A673 (cell line): ENCODE measurements at regions of chr7 and their contacts with region 1.

Region 1: DNA sequence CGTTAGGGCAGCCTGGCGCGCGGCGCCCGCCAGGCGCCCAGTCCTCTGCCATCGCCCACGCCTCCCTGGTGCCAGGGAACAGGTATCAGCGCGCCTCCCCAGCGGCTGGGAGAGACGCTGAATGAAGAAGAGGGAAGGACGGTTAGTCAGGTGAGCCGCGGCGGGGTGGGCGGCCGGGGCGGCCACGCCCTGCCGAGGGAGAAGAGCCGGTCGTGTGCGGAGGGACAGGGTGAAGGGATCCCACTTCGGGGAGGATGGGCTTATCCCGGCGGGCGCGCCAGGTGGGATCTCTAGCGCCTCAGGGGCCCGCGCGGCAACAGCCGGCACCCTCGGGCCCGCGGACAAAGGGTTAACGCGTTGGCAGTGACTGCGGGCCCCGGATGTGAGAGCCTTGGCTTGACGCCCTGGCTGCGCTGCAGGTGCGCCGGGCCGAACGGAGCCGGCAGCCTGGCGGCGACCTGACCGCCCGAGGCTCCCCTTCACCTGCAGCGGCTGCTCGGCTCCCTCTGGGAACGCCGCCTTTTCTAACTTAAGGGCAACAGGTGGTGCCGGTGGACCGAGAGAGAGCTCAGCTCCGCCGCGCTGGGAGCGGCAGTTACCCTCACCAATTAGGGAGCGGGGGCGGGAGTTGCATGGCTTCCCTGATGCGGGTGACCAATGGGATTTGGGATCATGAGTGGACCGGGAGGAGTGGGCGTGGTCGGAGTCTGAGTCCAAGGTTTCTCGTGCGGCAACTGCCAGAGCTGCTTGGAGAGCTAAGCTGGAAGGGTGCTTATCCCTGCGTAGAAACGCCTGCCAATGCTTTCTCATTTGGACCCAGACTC is at the start of gene ARL4A:
- DNase-seq: peak; percentile 99
- H3K4me3 ChIP-seq: peak within 1 kb of the TSS; percentile 78
- H3K27ac ChIP-seq: peak within 1 kb of the TSS; percentile 82
- H3K4me1 ChIP-seq: peaks cover 11% of the 10 kb centered on the region
- H3K27me3 ChIP-seq: no peaks in the 10 kb centered on the region
- CTCF ChIP-seq: peak; percentile 57
- total RNA-seq, gene ARL4A: 15.9 and 18.3 TPM in 2 replicates

Region 2: DNA sequence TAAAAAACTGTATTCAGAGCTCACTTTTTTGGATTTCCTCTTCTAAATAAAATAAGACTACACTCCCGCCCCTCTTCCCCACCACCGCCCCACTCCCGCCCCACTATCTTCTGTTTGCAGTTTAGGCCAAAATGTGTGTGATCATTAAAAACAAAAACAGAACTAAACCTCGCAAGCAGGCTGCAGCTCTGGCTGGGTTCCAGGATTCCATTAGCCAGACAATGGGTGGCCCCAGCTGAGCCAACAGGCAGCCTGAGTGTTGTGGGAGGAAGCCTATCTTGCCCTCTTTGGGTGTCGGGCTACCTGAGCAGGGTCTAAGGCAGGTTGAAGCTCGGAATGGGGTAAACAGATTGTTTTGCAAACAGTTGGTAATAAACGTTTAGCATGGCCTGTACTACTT is 42.0 kb after region 1 on chr7:
- CTCF ChIA-PET with region 1: interaction called, 8 read pairs
- POLR2A ChIA-PET with region 1: no interaction called
- intact Hi-C with region 1: loop called (anchors 5 kb)
- DNase-seq: peak; percentile 78
- H3K4me3 ChIP-seq: no peak overlapping the region
- H3K27ac ChIP-seq: no peak overlapping the region
- H3K4me1 ChIP-seq: peaks cover 39% of the 10 kb centered on the region
- H3K27me3 ChIP-seq: no peaks in the 10 kb centered on the region
- CTCF ChIP-seq: no peak

Region 3: GRCh38 chr7:12888717-12889116 is 201.6 kb after region 1 on chr7:
- CTCF ChIA-PET with region 1: no interaction called
- POLR2A ChIA-PET with region 1: no interaction called
- intact Hi-C with region 1: loop called (anchors 10 kb)
- DNase-seq: no peak
- H3K4me3 ChIP-seq: no peak overlapping the region
- H3K27ac ChIP-seq: no peak overlapping the region
- H3K4me1 ChIP-seq: no peaks in the 10 kb centered on the region
- H3K27me3 ChIP-seq: peaks cover 58% of the 10 kb centered on the region
- CTCF ChIP-seq: no peak

Region 4: DNA sequence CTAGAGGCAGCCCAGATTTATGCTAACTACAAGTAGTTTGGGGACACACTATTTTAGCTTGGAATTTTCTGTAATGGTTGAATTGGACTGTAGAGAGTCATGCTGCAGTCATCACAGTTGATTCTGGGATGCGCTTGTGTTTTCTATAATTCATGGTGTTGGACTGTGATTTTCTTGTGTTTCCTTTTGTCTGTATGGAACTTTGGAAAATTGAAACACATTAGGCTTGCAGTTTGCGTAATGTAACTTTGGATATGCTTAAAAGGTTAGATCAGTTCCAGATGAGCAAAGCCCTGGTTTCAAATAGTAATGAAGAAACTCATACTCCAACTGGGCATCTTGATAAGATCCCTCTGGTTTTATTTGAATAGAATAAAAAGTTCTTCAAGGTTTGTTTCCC is 502.6 kb after region 1 on chr7:
- CTCF ChIA-PET with region 1: no interaction called
- POLR2A ChIA-PET with region 1: no interaction called
- intact Hi-C with region 1: loop called (anchors 5 kb)
- DNase-seq: no peak
- H3K4me3 ChIP-seq: no peak overlapping the region
- H3K27ac ChIP-seq: no peak overlapping the region
- H3K4me1 ChIP-seq: no peaks in the 10 kb centered on the region
- H3K27me3 ChIP-seq: peaks cover 40% of the 10 kb centered on the region
- CTCF ChIP-seq: no peak

Region 5: DNA sequence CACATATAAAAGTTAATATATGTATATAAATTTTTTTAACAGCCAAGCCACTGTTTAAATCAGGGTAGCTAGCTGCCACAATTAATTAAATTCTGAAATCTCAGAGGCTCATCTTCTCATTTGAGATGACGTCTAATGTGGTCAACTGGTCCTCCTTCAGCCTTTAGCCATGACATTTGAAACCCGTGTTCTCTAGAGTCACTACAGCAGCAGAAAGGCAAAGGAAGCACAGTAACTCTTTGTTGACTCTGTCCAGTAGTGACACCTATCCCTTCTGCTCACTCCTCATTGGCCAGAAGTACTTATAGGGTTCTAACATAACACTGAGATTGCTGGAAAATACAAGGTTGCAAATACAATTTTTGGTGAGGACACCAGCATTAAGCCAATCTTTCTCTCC is 746.8 kb after region 1 on chr7:
- CTCF ChIA-PET with region 1: no interaction called
- POLR2A ChIA-PET with region 1: no interaction called
- intact Hi-C with region 1: no loop called
- DNase-seq: no peak
- H3K4me3 ChIP-seq: no peak overlapping the region
- H3K27ac ChIP-seq: no peak overlapping the region
- H3K4me1 ChIP-seq: no peaks in the 10 kb centered on the region
- H3K27me3 ChIP-seq: peaks cover 3% of the 10 kb centered on the region
- CTCF ChIP-seq: no peak